Colonic mucosa (tissue), 4 donors: ENCODE measurements at regions of chr4 and their contacts with region 1.

Region 1: DNA sequence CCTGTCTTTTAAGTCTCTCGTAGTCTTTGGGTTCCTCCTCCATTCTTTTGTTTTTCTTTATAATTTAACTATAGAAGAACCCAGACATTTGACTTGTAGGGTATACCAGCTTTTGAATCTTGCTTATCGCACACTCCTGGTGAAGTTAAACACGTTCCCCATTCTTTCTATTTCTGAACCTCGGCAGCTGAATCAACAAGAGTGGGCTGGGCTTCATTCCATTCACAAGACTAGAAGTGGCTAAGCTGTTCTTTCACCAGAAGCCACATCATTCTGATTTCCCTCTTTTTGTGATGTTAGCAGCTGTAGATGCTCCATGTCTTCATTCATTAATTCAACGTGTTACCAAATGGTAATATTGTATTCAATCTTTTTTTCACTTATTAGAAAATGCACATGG is 167.9 kb downstream of the CORIN start:
- DNase-seq: no peak
- H3K4me3 ChIP-seq: no peak overlapping the region
- H3K27ac ChIP-seq: no peak overlapping the region
- H3K4me1 ChIP-seq: no peaks in the 10 kb centered on the region
- H3K27me3 ChIP-seq: no peaks in the 10 kb centered on the region
- CTCF ChIP-seq: no peak

Region 2: DNA sequence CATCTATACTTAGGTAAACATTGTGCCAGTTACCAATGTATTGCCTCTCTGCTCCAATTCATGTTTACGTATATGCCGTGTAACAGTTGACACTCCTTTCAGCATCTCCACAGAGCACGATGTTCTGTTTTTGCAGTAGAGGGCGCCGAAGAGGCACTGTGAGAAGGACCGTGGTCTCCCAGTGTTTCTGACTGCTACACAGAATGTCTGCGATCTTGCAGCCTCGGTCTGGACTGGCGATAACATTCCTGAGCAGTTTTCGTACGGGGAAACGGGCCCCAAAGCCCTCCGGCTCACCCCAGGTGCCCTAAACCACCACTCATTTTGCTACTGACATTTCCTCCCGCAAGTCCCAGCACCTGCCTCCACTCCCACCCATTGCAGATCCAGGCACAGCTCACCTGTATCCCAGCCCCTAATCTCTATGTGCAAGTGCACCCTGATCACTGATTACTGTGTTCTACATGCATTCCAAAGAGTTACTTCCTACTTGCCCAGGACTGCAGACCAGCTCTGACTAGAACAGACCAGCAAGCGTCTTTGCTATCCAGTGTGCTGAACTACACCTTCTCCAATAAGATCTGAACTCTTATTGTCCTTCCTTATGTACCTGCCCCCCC is 256.8 kb after region 1 on chr4:
- intact Hi-C with region 1: loop called (anchors 5 kb)
- DNase-seq: peak; percentile 71
- H3K4me3 ChIP-seq: peak overlapping the region; percentile 16
- H3K27ac ChIP-seq: no peak overlapping the region
- H3K4me1 ChIP-seq: no peaks in the 10 kb centered on the region
- H3K27me3 ChIP-seq: no peaks in the 10 kb centered on the region
- CTCF ChIP-seq: peak; percentile 55